ENCODE measurements at regions of chr2 and their contacts with region 1.

Region 1: GRCh38 chr2:27123302-27124231 is at the start of gene ABHD1:
- DNase-seq: peak; percentile 27 to 80 (median 60)
- ATAC-seq: peak; percentile 80 to 91
- H3K4me3 Mint-ChIP-seq: peak within 1 kb of the TSS; percentile 87 to 97 (median 92)
- H3K27ac Mint-ChIP-seq: peak within 1 kb of the TSS; percentile 64 to 94 (median 90)
- H3K4me1 Mint-ChIP-seq: peaks cover 11 to 28% (median 21%) of the 10 kb centered on the region in 4 donors
- H3K27me3 Mint-ChIP-seq: peaks cover 8 to 17% (median 13%) of the 10 kb centered on the region in 5 donors
- polyA plus RNA-seq, gene ABHD1: 1.3 to 1.7 (median 1.4) TPM

Region 2: DNA sequence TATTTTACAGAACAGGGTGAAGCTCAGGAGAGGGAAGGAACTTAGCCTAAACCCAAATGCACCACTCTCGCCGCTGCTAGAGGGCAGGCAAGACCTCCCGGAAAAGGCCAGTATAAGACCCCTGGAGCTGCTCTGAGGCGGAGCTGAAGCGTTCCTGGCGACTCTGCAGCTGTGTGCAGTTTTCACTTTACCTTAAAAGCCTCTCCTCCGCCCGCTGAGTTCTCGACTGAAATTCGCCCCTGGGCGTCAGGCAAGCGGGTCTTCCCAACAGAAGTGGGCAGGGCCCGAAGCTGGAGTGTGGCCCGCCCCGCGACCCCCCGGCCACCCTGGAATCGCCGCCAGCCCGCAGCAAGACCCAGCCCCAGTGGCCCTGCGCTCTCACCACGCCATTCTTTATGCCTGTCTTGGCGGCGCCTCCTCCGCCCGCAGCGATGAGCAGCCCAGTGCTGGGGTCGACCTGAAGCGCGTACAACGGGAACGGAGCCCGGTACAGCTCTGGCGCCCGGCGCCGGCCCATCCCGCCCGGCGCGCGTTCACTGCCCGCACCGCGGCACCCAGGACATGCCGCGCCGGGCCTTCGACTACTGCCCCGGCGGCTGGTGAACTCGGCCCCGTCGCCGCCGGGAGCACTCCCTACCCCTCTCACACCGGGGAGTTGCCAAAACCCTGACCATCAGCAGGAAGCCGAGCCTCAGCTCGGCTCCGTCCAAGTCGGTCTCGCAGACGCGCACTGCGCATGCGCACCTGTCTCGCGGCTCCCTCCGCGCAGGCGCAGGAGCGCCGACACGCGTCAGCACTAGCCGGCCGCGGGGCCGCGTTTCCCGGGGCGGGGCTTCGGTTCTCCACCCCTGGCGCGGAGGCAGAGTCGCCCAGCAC is 10.6 kb after region 1 on chr2 and contains the start of gene PREB:
- POLR2A ChIA-PET with region 1: interaction called, 55 read pairs
- DNase-seq: peak; percentile 94 to 99 (median 98)
- ATAC-seq: peak; percentile 97 to 98
- H3K4me3 Mint-ChIP-seq: peak within 1 kb of the TSS; percentile 90 to 98 (median 96)
- H3K27ac Mint-ChIP-seq: peak within 1 kb of the TSS; percentile 85 to 98 (median 97)
- H3K4me1 Mint-ChIP-seq: peaks cover 19 to 37% (median 24%) of the 10 kb centered on the region in 4 donors
- H3K27me3 Mint-ChIP-seq: no peaks in the 10 kb centered on the region
- polyA plus RNA-seq, gene PREB: 40.6 to 58.4 (median 51.1) TPM

Measured in naive thymus-derived CD8-positive, alpha-beta T cell (primary cell).